ENCODE measurements at regions of chr9 and their contacts with region 1.

Region 1: DNA sequence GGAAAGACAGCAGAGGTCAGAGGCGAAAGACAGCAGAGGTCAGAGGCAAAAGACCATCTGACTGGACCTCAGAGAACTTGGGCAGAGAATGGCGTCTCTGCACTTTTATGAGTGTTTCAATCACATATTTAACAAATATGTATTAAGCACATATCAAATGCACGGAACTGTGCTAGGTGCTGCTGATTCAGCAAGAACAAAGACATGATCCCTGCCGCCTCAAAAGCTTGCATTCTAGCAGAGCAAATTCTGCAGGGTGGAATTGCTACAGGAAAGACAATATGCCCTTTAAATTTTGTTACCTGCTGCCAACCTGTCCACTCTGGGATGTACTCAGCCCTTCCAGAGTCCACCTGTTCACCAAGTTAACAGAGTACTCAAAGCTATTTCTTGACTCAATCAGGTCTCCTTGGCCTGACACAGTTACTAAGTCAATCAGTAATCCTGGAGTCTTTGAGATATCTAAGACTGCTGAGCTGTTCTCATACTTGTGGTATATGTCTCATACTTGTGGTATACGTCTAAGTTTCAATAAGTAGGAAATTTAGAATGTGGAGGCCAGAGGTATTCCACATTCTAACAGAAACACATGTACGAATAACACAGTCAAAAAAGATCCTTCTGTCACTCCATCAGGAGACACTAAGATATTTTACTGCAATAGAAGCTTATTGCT is 131.8 kb downstream of the GNAQ start:
- DNase-seq: peak in 1 of 2 experiments; percentile 61
- H3K4me3 ChIP-seq: no peak overlapping the region
- H3K27ac ChIP-seq: no peak overlapping the region
- H3K4me1 ChIP-seq: peaks cover 39% of the 10 kb centered on the region
- H3K27me3 ChIP-seq: no peaks in the 10 kb centered on the region
- CTCF ChIP-seq: no peak

Region 2: DNA sequence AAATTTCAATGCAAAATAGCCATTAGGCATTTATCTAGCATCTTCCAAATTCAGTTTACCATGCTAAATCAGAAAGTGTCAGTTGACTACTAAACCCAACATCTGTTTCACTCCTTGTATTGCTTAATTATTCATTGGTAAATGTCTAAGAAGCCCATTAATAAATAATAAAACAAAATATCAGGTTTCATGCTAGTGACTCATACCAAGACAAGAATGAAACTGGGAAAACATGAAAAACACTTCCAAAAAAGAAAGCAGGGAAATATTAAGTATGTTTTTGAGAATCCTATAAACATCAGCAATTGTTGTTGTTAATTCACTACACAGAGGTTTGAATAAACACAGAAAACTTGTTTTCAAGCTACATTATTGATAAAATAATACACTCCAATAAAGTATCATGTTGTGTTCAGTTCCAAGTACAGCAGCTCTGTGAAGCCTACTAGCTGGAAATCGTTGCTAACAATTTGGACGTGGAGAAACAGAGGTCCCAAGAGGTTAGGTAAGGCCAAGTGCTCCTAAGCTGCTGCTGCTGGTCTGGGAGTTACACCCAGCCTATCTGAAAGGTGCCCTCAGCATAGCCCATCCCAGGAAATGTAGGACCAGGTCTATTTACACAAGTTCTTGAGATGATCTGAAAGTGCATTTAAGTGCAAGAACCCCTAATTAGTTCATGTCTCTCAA is 53.0 kb after region 1 on chr9:
- CTCF ChIA-PET with region 1: no interaction called
- POLR2A ChIA-PET with region 1: no interaction called
- intact Hi-C with region 1: loop called (anchors 1 kb)
- DNase-seq: peak in 1 of 2 experiments; percentile 61
- H3K4me3 ChIP-seq: no peak overlapping the region; the same call in 1 of the 2 replicates
- H3K27ac ChIP-seq: peak overlapping the region; percentile 49; the same call in 1 of the 2 replicates
- H3K4me1 ChIP-seq: peaks cover 20% of the 10 kb centered on the region
- H3K27me3 ChIP-seq: no peaks in the 10 kb centered on the region
- CTCF ChIP-seq: no peak

Region 3: DNA sequence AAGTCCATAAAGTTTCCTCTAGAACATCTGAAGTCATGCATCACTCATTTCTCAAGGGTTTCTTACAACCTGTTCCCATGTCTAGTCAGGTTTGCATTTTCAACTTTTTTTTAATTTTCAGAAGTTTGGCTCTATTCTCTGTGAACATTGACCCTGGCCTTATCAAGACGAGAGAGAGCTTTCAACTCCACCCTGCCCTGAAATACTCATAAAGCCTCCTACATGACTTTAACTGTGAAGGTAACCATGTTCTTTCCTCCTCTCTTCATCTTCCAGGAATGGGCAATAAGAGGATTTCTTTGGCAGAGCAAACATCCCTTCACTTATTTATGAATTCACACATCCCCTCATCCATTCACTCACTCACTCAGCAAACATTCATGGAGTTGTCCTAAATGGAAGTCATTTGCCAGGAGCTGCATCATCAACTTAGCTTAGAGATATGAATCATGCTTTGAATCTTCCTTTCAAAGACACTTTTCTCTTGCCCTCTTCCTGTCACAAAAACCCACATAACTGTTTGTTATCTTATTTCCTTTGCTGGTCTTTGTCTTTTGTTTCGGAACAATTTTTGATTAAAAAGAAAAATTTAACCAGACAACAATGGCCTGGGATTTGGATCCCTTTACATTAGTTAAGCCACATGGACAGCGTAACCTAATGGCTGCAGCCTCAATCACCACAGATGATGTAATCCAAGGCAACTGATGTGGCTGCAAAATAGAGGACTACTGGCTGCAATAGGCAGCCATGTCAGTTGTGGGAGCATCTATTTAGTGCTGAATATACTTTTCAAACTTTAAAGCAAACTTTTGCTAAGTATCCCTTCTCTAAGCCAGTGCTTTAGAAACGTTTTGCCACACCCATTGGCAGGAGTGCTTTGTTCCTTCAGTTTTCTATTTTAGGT is 174.8 kb after region 1 on chr9:
- CTCF ChIA-PET with region 1: no interaction called
- POLR2A ChIA-PET with region 1: no interaction called
- intact Hi-C with region 1: no loop called
- DNase-seq: no peak
- H3K4me3 ChIP-seq: no peak overlapping the region
- H3K27ac ChIP-seq: no peak overlapping the region
- H3K4me1 ChIP-seq: no peaks in the 10 kb centered on the region
- H3K27me3 ChIP-seq: no peaks in the 10 kb centered on the region
- CTCF ChIP-seq: no peak

Measured in PC-9 (cell line).